HEK293 (cell line): ENCODE measurements at regions of chr11 and their contacts with region 1.

Region 1: GRCh38 chr11:18775492-18776292 is 15.9 kb downstream of the PTPN5 start:
- H3K4me3 ChIP-seq: no peak overlapping the region
- H3K27ac ChIP-seq: no peak overlapping the region
- H3K4me1 ChIP-seq: no peaks in the 10 kb centered on the region
- CTCF ChIP-seq: peak; percentile 19; the same call in 1 of the 2 replicates

Region 2: GRCh38 chr11:18706330-18707243 is 69.1 kb before region 1 on chr11:
- CTCF ChIA-PET with region 1: no interaction called
- POLR2A ChIA-PET with region 1: no interaction called
- H3K4me3 ChIP-seq: no peak overlapping the region
- H3K27ac ChIP-seq: no peak overlapping the region
- H3K4me1 ChIP-seq: no peaks in the 10 kb centered on the region
- CTCF ChIP-seq: no peak

Region 3: DNA sequence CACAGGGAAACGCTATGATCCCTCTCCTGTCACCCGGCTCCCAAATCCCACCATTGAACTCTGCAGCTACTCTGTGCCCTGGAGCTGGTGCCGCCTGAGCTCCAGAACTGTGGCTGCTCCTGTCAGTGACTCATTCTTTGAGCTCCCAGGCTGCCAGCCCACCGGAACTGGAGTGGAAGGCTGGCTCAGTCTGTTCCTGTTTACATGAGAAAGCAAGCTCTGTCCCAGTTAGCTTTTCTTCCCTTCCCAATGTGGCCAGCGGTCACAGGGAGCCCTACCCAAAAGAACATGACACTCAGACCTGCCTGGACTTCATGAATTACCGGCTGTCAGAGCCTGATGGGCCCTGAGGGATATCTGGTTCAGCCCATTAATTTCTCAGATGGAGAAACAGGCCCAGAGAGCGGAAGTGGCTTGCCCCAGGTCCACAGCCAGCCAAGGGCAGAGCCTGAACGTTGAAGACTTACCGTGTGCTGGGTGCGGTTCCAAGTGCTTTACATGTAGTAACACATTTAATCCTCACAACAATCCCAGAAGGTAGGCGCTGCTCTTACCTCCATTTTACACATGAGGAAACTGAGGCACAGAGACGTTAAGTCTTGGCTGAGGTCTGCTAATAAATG is 25.9 kb before region 1 on chr11:
- CTCF ChIA-PET with region 1: interaction called, 15 read pairs
- POLR2A ChIA-PET with region 1: no interaction called
- H3K4me3 ChIP-seq: no peak overlapping the region
- H3K27ac ChIP-seq: no peak overlapping the region
- H3K4me1 ChIP-seq: no peaks in the 10 kb centered on the region
- CTCF ChIP-seq: no peak

Region 4: DNA sequence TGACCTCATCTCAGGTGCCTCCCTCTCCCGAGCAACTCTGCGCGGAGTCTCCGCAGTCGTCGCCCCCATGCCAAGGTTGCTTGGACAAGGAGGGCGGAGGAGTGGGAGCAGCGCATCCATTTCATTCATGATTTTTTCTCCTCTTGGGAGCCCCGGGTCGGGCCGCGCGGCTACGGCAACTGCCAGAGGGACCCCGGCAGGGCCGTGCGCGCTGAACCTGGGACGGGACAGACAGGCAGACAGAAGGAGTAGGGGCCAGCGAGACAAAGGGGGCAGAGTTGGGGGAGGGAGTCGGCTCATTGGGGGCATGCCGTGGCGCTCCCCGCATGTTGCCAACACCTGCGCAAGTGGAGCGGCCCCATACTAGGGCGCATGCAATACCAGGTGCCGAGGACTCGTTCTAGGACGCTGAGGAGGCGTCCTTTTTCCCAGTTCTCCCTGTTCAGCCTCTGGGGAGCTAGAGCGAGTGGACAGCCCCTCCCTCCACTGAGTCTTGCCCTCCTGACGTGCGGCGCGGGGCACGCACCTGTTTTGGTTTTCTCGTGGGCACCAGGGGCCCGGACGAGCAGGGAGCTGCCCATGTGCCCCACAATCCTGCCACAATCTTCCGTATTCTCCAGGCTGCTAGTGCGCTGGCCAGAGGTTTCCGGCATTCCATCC is 16.4 kb after region 1 on chr11:
- CTCF ChIA-PET with region 1: interaction called, 140 read pairs
- POLR2A ChIA-PET with region 1: no interaction called
- H3K4me3 ChIP-seq: peak overlapping the region; percentile 54
- H3K27ac ChIP-seq: no peak overlapping the region
- H3K4me1 ChIP-seq: no peaks in the 10 kb centered on the region
- CTCF ChIP-seq: no peak

Region 5: DNA sequence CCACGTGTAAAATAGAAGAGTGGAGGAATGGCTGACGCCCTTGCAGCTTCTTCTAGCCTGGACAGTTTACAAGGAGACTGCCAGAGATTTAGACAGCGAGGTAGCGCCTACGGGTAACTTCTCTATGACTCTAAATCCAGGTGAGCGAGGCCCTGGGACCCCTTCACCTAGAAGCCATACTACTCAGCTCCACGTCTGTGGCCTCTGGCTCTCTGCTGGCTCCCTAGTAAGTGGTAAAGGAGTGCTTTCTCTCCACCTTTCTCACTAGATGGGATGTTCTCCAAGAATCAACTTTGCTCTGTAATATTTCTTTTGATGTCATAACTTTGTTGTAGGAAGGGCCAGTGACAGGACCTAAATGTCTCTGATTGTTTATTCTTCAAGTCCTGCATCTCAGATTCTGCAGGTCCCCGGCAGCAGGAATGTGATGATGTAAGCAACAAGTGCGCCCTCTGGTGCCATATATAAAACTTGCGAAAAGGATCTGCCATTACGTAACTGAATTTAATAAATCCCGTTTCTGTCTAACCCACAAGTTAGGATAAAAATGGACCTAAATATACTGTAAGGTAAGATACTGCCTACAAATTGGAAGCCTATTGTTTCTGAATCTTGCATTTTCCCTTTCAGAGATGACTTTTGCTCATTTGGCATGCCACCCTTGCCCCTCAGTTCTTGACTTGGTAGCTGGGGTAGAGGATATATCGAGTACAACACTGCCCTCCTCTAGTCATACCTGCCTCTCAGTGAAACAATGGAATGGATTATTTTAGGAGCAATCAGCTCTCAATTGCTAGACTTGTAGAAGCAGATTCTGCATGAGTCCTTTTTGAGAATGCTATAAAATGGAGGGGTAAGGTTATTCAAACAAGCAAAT is 26.9 kb after region 1 on chr11:
- CTCF ChIA-PET with region 1: interaction called, 140 read pairs
- POLR2A ChIA-PET with region 1: no interaction called
- H3K4me3 ChIP-seq: no peak overlapping the region
- H3K27ac ChIP-seq: no peak overlapping the region
- H3K4me1 ChIP-seq: no peaks in the 10 kb centered on the region
- CTCF ChIP-seq: no peak

Region 6: GRCh38 chr11:18853086-18853720 is 77.5 kb after region 1 on chr11:
- CTCF ChIA-PET with region 1: interaction called, 18 read pairs
- POLR2A ChIA-PET with region 1: no interaction called
- H3K4me3 ChIP-seq: no peak overlapping the region
- H3K27ac ChIP-seq: no peak overlapping the region
- H3K4me1 ChIP-seq: no peaks in the 10 kb centered on the region
- CTCF ChIP-seq: no peak